Left ventricle myocardium superior (tissue), 1 donor: ENCODE measurements at regions of chr14 and their contacts with region 1.

Region 1: DNA sequence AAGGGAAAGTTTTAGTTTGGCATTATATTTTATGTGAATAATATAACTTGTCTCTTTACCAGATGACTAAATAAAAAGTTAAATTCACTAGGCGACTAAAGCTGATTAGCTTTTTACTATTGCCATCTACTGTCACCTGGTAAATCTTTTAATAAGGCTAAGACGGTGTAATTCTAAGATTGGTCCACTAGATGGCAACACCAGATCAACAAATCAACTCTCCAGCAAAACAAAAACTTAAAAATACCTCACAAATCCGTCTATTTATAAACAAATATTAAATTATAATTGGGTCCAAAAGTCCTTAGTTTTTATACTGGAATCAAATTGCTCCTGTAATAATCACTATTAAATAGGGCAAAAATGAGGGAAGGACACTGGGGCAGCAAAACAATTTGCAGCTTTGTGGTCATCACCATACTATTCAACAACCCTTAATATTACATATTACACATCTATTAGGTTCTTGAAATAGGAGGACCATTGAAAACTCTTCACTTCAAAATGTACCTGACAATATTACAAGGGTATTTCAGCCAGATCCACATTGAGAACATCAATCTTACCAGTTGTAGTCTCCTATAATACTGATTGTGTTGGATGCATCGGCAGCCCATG is 47.9 kb downstream of the GALC start:
- DNase-seq: no peak
- ATAC-seq: no peak

Region 2: GRCh38 chr14:87175175-87175574 is 769.9 kb before region 1 on chr14:
- intact Hi-C with region 1: no loop called
- DNase-seq: no peak
- ATAC-seq: no peak

Region 3: GRCh38 chr14:88013750-88014349 is 68.8 kb after region 1 on chr14:
- intact Hi-C with region 1: loop called (anchors 10 kb)
- DNase-seq: peak; percentile 59
- ATAC-seq: peak; percentile 95

Region 4: GRCh38 chr14:88026890-88027289 is 81.8 kb after region 1 on chr14:
- intact Hi-C with region 1: no loop called
- DNase-seq: no peak
- ATAC-seq: no peak

Region 5: GRCh38 chr14:88312257-88312656 is 367.2 kb after region 1 on chr14:
- intact Hi-C with region 1: no loop called
- DNase-seq: no peak
- ATAC-seq: no peak